Activated CD4-positive, alpha-beta T cell treated with anti-CD3 and anti-CD28 coated beads for 36 hours (primary cell): ENCODE measurements at regions of chr19 and their contacts with region 1.

Region 1: DNA sequence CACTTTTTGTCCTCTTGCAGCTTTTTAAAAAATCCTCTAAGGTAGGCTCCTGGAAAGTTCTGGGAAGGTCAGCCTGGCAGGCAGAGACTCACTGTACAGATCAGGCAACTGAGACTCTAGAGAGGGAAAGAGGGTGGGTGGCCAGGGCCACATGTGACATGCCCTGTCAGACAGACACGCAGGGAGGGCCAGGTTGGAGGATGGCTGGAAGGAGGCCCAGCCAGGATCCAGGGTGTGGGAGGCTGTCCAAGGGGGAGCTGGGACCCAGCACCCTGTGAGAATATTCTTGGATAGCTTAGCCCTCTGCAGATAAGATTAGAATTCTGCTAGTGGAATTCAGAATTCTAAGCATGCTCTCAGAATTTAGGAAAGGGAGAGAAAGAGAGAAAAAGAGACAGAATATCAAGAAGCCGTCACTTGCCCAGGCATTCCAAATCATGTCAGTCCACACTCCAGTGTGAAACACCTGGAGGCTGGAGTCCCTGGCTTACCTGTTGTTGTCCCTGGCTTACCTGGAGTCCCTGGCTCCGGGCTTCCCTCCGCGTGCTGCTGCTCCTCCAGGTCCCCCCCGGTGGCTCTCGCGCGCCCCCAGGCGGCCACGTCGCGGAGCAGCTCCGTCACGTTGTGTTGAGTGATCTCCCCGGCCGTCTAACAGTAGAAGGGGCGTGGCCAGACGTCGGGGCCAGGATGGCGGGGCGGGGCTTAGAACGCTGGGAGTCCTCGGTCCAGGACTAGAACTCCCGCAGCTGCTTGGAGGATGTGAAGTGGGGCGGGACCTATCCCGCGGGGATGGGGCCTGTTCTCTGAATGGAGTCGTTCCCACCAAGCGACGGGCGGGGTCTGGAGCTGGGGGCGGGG is 2.8 kb upstream of the TNNI3 start:
- DNase-seq: peak; percentile 96
- ATAC-seq: peak; percentile 98
- H3K4me3 Mint-ChIP-seq: no peak overlapping the region
- H3K27ac Mint-ChIP-seq: no peak overlapping the region
- H3K4me1 Mint-ChIP-seq: peaks cover 9% of the 10 kb centered on the region
- H3K27me3 Mint-ChIP-seq: peaks cover 23% of the 10 kb centered on the region

Region 2: DNA sequence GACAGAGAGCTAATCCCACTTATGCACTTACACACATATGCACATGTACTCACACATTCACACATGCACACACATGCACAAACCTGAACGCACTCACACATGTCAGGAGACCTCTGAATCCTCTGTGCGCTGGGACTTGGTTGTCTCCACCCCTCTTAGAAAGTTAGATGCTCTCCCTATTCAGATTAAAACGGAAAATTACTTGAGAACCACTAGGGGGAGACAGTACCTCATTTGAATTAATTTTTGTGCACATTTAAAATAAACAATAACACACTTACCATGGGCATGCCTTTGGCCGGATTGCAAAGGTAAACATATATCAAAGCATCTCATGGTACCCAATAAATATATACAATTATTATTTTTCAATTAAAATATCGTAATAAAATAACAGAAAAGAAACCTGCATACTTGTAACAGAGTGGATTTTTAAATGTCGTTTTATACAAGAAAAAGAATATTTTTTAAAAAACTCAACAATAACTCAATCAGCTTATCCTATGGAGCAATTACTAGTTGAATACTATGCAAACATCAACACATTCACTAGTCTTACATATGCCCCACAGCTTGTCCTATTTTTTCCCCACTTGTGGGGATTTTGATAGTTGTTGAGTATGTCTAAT is 507.1 kb before region 1 on chr19:
- CTCF ChIA-PET with region 1: no interaction called
- POLR2A ChIA-PET with region 1: no interaction called
- intact Hi-C with region 1: loop called in 1 of 2 experiments (anchors 5 kb)
- DNase-seq: no peak
- ATAC-seq: no peak
- H3K4me3 Mint-ChIP-seq: no peak overlapping the region
- H3K27ac Mint-ChIP-seq: no peak overlapping the region
- H3K4me1 Mint-ChIP-seq: no peaks in the 10 kb centered on the region
- H3K27me3 Mint-ChIP-seq: peaks cover 8% of the 10 kb centered on the region

Region 3: DNA sequence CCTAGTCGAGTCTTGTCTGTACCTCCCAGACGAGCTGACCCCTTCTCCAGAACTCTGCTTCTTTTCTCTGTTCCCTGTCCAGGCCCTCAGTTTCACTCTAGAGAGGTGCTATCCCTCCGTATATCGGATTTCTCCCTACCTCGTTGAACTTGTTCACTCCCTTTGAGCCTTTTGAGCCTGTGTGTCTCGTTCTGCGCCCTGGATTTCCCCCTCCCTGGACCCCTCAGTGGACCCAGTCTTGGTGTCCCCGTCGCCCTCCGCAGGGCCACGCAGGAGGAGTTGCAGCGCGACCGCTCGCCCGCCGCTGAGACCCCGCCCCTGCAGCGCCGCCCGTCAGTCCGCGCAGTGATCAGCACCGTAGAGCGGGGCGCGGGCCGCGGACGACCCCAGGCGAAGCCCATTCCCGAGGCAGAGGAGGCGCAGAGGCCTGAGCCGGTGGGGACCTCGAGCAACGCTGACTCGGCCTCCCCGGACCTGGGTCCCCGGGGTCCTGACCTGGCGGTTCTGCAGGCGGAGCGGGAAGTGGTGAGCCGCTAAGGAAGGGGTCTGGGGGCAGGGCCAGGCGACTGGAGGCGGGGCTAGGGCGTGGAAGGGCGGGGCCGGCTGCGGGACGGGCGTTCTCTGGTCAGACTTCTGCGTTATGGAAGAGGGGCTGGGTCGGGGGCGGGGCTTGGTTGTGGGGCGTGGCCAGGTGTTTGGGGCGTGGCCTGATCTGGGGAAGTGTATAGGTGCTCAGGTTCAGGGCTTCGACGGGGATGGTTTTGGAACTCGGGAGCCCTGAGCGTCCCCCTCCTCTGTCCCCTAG is 79.2 kb before region 1 on chr19:
- CTCF ChIA-PET with region 1: no interaction called
- POLR2A ChIA-PET with region 1: no interaction called
- intact Hi-C with region 1: loop called (anchors 1 to 5 kb)
- DNase-seq: peak; percentile 95
- ATAC-seq: peak; percentile 71
- H3K4me3 Mint-ChIP-seq: peak overlapping the region; percentile 69
- H3K27ac Mint-ChIP-seq: peak overlapping the region; percentile 31
- H3K4me1 Mint-ChIP-seq: peaks cover 22% of the 10 kb centered on the region
- H3K27me3 Mint-ChIP-seq: peaks cover 56% of the 10 kb centered on the region

Region 4: GRCh38 chr19:55088543-55089341 is 71.6 kb before region 1 on chr19:
- CTCF ChIA-PET with region 1: interaction called, 16 read pairs
- POLR2A ChIA-PET with region 1: interaction called, 3 read pairs
- intact Hi-C with region 1: loop called in 1 of 2 experiments (anchors 5 kb)
- DNase-seq: peak; percentile 89
- ATAC-seq: peak; percentile 51
- H3K4me3 Mint-ChIP-seq: no peak overlapping the region
- H3K27ac Mint-ChIP-seq: no peak overlapping the region
- H3K4me1 Mint-ChIP-seq: peaks cover 16% of the 10 kb centered on the region
- H3K27me3 Mint-ChIP-seq: peaks cover 31% of the 10 kb centered on the region

Region 5: DNA sequence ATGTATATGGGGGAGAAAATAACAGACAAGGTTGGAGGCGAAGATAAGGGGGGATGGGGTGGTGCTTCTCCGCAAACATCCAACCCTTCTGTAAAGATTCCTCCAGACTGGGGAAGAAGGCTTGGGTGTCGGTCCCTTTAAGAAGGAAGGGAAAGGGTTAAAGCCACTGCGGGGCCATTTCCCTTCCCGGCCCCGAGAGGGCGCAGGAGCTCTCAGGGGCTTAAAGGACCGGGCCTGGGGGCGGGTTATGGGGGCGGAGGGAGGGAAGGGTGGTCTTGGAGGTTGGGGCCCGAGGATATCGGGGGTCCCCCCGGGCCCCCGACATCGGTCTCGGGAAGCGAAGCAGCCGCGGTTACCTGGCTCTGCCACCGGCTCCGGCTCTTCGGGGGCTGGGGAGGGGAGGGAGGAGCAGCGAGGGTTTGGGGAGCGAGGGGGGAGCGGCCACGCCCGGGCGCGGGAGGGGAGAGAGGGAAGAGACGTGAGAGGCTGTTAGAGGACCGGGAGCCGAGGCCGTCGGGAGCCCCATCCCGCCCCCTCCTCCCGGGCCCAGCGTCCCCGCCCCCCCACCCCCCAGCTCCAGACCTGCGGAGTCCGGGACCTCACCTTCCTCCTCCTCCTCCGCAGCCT is 14.2 kb before region 1 on chr19:
- CTCF ChIA-PET with region 1: interaction called, 9 read pairs
- POLR2A ChIA-PET with region 1: no interaction called
- intact Hi-C with region 1: loop called (anchors 1 kb)
- DNase-seq: peak; percentile 59
- ATAC-seq: peak; percentile 23
- H3K4me3 Mint-ChIP-seq: no peak overlapping the region
- H3K27ac Mint-ChIP-seq: no peak overlapping the region
- H3K4me1 Mint-ChIP-seq: peaks cover 2% of the 10 kb centered on the region
- H3K27me3 Mint-ChIP-seq: peaks cover 23% of the 10 kb centered on the region